Caco-2 (cell line): ENCODE measurements at regions of chr19 and their contacts with region 1.

Region 1: DNA sequence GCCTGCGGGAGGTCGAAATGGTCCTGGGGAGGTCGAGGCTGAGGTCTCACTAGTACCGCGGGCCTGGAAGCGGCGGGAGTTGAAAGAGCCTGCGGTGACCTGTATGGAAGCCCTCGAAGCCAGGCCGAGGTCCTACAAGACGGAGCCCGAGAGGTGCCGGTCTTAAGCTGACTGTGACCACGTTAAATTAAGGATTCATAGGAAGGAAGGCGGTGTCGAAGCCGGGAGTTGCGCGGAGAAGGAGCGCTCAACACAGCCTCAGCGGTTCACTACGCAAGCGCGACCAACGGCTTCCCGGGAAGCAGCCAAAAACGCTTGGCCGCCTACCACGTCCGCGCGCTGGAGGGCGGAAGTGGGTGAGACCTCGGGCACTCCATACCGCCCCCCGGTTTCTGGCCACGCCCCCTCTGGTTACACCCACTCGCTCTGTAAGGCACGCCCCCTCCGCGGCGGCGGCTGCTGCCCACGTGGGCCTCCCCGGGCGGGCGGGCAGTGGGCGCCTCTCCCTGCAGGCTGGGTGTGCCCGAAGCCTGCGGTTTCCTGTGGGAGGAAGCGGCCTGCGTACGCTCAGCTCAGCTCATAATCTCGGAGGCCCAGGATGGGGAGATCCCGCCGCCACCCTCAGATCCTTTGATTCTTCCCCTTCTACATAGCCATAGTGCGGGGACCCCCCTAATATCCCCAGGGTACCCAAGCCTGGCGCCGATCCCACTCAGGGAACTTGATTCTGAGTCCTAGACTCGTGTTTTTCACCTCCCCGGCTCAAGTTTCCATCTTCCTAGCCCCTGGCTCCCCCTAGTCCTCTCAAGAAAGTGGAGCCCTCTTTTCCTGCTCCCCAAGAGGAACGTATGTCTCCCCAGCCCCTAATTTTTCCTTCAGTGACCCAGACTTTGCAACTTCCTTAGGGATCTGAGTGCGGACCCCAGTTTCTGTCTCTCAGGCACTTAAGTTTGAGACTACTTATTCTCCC is 3.4 kb upstream of the EMP3 start:
- DNase-seq: peak; percentile 98 to 99
- H3K4me3 ChIP-seq: peak overlapping the region; percentile 93
- H3K4me3 Mint-ChIP-seq: peak overlapping the region; percentile 96
- H3K27ac Mint-ChIP-seq: peak overlapping the region; percentile 95
- H3K4me1 ChIP-seq: peaks cover 25% of the 10 kb centered on the region
- H3K4me1 Mint-ChIP-seq: peaks cover 34% of the 10 kb centered on the region
- H3K27me3 ChIP-seq: no peaks in the 10 kb centered on the region
- H3K27me3 Mint-ChIP-seq: no peaks in the 10 kb centered on the region
- CTCF ChIP-seq: peak in 1 of 2 experiments; percentile 15

Region 2: GRCh38 chr19:48501496-48502350 is 179.8 kb after region 1 on chr19:
- CTCF ChIA-PET with region 1: interaction called, 10 read pairs
- POLR2A ChIA-PET with region 1: no interaction called
- intact Hi-C with region 1: no loop called
- DNase-seq: peak; percentile 99 to 100
- H3K4me3 ChIP-seq: peak overlapping the region; percentile 57
- H3K4me3 Mint-ChIP-seq: peak overlapping the region; percentile 80
- H3K27ac Mint-ChIP-seq: peak overlapping the region; percentile 87
- H3K4me1 ChIP-seq: peaks cover 15% of the 10 kb centered on the region
- H3K4me1 Mint-ChIP-seq: peaks cover 22% of the 10 kb centered on the region
- H3K27me3 ChIP-seq: no peaks in the 10 kb centered on the region
- H3K27me3 Mint-ChIP-seq: no peaks in the 10 kb centered on the region
- CTCF ChIP-seq: no peak